CD8-positive, alpha-beta T cell (primary cell): ENCODE measurements at regions of chr19 and their contacts with region 1.

Region 1: DNA sequence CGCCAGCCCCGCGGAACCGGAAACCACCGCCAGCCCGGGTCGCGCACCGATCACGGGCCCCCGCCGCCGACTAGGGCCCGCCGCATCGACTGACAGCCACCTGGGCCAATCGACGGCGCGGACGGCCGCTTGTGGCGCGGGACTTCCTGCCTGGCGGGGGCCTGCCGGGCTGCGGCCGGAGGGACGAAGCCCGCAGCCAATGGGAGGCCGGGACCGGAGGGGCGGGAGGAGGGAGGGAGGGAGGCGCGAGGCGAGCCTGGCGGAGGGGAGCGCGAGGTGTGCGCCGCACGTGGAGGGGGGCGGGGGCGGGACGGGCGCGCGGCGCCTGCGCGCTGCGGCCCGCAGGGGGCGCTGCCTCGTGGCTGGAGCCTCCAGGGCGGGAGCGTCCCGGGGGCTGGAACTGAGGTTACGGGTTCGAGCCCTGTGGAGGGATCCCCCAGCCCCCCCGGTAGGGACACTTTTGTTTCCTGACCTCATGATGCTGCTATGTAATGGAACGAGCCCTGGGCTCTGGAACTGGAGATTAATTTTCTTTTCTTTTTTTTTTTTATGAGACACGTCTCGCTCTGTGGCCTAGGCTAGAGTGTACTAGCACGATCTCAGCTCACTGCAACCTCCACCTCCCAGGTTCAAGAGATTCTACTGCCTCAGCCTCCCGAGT is at the start of gene MLLT1:
- DNase-seq: peak; percentile 88 to 98 (median 93)
- ATAC-seq: peak; percentile 85
- H3K4me3 ChIP-seq: peak within 1 kb of the TSS; percentile 60 to 61
- H3K4me3 Mint-ChIP-seq: peak within 1 kb of the TSS; percentile 88
- H3K27ac ChIP-seq: peak within 1 kb of the TSS; percentile 50 to 77
- H3K27ac Mint-ChIP-seq: peak within 1 kb of the TSS; percentile 93
- H3K4me1 ChIP-seq: peaks cover 26% of the 10 kb centered on the region
- H3K4me1 Mint-ChIP-seq: peaks cover 44% of the 10 kb centered on the region
- H3K27me3 ChIP-seq: no peaks in the 10 kb centered on the region
- H3K27me3 Mint-ChIP-seq: no peaks in the 10 kb centered on the region
- CTCF ChIP-seq: peak; percentile 85
- total RNA-seq, gene MLLT1: 11.8 to 15.0 TPM

Region 2: DNA sequence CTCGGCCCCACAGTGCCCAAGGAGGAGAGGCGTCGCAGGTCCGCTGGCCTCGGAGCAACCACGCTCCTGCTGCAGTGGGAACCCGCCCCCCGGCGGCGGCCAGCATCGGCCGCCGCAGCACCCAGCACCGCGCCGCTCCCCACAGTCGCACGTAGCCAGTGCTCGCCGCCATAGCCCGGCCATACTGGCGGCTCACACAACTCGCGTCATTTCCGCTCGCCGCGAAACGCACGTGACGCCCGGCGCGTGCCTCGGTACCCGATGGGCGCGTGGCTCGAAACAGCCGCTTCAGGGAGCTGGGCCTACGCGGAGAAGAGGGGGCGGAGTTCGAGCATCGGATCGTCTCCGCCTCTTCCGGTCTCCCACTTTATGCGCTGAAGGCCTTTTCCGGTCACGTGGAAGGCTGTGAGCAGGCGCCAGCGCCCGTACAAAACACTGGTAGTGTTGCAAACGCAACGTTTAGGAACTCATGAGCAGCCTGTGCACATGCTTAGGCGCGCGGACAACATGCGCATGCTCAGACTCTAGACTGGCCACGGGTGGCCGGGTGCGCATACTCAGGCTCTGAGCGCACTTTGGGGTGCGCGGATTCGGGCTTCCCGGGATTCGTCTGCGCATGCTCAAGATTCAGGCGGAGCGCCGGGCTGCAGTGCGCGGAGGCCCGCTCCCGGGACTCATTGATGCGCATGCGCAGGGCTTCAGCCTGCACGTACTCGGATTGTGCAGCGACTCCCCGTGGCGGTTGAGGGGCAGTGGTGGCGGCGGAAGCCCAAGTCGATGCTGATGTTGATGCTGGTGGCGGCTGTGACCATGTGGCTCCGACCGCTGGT is 559.9 kb before region 1 on chr19 and contains the starts of genes CATSPERD and LONP1:
- CTCF ChIA-PET with region 1: interaction called, 3 read pairs
- POLR2A ChIA-PET with region 1: no interaction called
- intact Hi-C with region 1: loop called in 1 of 2 experiments (anchors 5 kb)
- DNase-seq: peak; percentile 92 to 100 (median 97)
- ATAC-seq: peak; percentile 86
- H3K4me3 ChIP-seq: peak within 1 kb of the TSS; percentile 91 to 94
- H3K4me3 Mint-ChIP-seq: peak within 1 kb of the TSS; percentile 92
- H3K27ac ChIP-seq: peak within 1 kb of the TSS; percentile 93 to 96
- H3K27ac Mint-ChIP-seq: peak within 1 kb of the TSS; percentile 96
- H3K4me1 ChIP-seq: peaks cover 23% of the 10 kb centered on the region
- H3K4me1 Mint-ChIP-seq: peaks cover 29% of the 10 kb centered on the region
- H3K27me3 ChIP-seq: no peaks in the 10 kb centered on the region
- H3K27me3 Mint-ChIP-seq: no peaks in the 10 kb centered on the region
- CTCF ChIP-seq: peak; percentile 89
- total RNA-seq, gene CATSPERD: not detected
- total RNA-seq, gene LONP1: 90.6 to 109 TPM

Region 3: DNA sequence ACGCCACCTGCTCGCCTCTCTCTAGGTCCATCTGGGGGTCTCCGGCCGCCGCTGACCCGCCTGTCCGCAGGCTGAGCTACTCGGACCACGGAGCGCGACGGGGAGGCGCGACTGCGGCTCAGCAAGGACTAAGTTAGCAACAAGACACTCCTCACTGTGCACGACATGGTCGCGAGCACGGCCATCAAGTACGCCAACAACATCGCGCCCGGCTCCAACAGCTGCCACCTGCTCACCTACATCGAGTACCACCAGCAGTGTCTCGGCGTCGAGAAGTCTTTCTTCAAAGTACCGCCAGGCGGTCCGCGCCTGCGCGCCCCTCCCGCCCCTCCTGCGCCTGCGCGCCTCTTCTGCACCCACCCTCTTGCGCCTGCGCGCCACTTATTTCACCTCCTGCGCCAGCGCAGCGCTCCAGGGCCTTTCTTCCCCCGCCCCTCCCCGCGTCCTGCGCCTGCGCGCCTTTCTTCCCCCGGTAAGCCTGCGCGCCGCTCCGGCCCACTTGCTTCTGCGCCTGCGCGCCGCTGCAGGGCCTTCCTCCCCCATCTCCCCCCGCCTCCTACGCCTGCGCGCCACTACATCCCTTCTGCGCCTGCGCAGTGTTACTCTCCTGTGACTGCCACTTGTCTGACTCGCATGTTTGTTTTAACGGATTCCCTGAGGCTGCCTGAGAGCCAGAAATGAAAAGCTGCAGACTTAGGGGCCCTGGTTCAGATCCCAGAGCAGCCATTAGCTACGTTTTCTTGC is 80.6 kb before region 1 on chr19:
- CTCF ChIA-PET with region 1: no interaction called
- POLR2A ChIA-PET with region 1: no interaction called
- intact Hi-C with region 1: loop called in 1 of 2 experiments (anchors 1 kb)
- DNase-seq: peak; percentile 98 to 100 (median 100)
- ATAC-seq: peak; percentile 90
- H3K4me3 ChIP-seq: peak overlapping the region; percentile 80 to 99
- H3K4me3 Mint-ChIP-seq: peak overlapping the region; percentile 94
- H3K27ac ChIP-seq: peak overlapping the region; percentile 65 to 73
- H3K27ac Mint-ChIP-seq: peak overlapping the region; percentile 87
- H3K4me1 ChIP-seq: peaks cover 11% of the 10 kb centered on the region
- H3K4me1 Mint-ChIP-seq: peaks cover 10% of the 10 kb centered on the region
- H3K27me3 ChIP-seq: no peaks in the 10 kb centered on the region
- H3K27me3 Mint-ChIP-seq: peaks cover 3% of the 10 kb centered on the region
- CTCF ChIP-seq: peak; percentile 51

Region 4: GRCh38 chr19:6318772-6319171 is 38.7 kb after region 1 on chr19:
- CTCF ChIA-PET with region 1: no interaction called
- POLR2A ChIA-PET with region 1: no interaction called
- intact Hi-C with region 1: no loop called
- DNase-seq: no peak
- ATAC-seq: no peak
- H3K4me3 ChIP-seq: no peak overlapping the region
- H3K4me3 Mint-ChIP-seq: no peak overlapping the region
- H3K27ac ChIP-seq: no peak overlapping the region
- H3K27ac Mint-ChIP-seq: no peak overlapping the region
- H3K4me1 ChIP-seq: no peaks in the 10 kb centered on the region
- H3K4me1 Mint-ChIP-seq: no peaks in the 10 kb centered on the region
- H3K27me3 ChIP-seq: no peaks in the 10 kb centered on the region
- H3K27me3 Mint-ChIP-seq: no peaks in the 10 kb centered on the region
- CTCF ChIP-seq: no peak

Region 5: DNA sequence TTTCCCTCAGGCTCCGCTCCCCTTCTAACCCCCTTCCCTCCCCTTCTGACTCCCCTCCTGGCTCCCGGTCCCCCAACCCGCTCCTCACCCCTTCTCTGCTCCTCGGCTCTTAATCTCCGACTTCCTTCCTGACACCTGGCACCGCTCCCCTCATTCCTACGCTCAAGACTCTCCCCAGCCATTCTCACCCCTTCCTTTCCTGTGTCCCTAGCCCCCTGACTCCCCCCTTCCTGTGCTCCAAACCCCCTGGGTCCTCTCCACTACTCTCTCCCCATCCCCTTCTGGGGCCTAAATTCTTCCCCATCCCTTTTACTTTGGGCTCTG is 81.9 kb after region 1 on chr19:
- CTCF ChIA-PET with region 1: interaction called, 3 read pairs
- POLR2A ChIA-PET with region 1: no interaction called
- intact Hi-C with region 1: loop called (anchors 1 to 2 kb)
- DNase-seq: no peak
- ATAC-seq: peak; percentile 1
- H3K4me3 ChIP-seq: peak overlapping the region; percentile 78 to 79
- H3K4me3 Mint-ChIP-seq: peak overlapping the region; percentile 93
- H3K27ac ChIP-seq: peak overlapping the region; percentile 72 to 85
- H3K27ac Mint-ChIP-seq: peak overlapping the region; percentile 94
- H3K4me1 ChIP-seq: peaks cover 21% of the 10 kb centered on the region
- H3K4me1 Mint-ChIP-seq: peaks cover 25% of the 10 kb centered on the region
- H3K27me3 ChIP-seq: no peaks in the 10 kb centered on the region
- H3K27me3 Mint-ChIP-seq: no peaks in the 10 kb centered on the region
- CTCF ChIP-seq: no peak

Region 6: DNA sequence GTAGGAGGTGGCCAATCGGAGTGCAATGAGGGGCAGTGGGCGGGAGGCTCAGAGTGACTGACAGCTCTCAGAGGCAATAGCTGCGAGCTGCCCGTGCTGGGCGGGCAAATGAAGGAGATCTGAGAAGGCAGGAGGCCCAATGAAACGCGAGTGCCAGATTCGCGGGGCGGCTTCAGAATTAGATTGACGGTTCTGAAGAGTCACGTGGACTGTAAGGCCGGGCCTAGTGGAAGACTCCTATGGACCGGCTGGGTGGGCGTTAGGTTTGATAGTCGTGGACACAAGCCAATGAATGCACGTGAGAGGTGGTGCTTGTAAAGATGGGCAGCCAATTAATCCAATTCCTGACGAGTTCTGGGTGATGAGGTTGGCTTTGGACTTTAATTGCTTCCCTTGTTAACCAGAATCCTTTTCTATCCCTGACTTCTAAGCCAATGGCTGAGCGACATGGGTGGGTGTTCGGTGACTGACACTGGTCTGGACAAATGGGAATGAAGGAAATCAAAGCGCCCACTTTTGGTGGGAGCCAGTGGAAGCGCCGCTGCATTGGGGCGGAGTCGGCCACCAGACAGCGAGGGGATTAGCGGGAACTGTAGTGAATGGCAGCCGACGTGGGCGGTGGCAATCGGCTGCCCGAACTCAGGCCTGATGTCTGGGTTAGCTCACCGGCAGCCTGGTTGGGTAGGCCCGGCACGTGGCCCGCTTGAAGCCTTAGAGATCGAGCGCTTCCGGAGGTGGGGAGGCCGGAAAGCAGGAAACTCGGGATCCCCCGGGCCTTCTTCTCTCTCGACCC is 145.1 kb after region 1 on chr19:
- CTCF ChIA-PET with region 1: no interaction called
- POLR2A ChIA-PET with region 1: no interaction called
- intact Hi-C with region 1: loop called (anchors 1 kb)
- DNase-seq: peak; percentile 97 to 100 (median 98)
- ATAC-seq: peak; percentile 82
- H3K4me3 ChIP-seq: peak overlapping the region; percentile 7 to 48
- H3K4me3 Mint-ChIP-seq: peak overlapping the region; percentile 78
- H3K27ac ChIP-seq: peak overlapping the region; percentile 39 to 92
- H3K27ac Mint-ChIP-seq: peak overlapping the region; percentile 93
- H3K4me1 ChIP-seq: peaks cover 35% of the 10 kb centered on the region
- H3K4me1 Mint-ChIP-seq: peaks cover 37% of the 10 kb centered on the region
- H3K27me3 ChIP-seq: no peaks in the 10 kb centered on the region
- H3K27me3 Mint-ChIP-seq: no peaks in the 10 kb centered on the region
- CTCF ChIP-seq: no peak

Region 7: DNA sequence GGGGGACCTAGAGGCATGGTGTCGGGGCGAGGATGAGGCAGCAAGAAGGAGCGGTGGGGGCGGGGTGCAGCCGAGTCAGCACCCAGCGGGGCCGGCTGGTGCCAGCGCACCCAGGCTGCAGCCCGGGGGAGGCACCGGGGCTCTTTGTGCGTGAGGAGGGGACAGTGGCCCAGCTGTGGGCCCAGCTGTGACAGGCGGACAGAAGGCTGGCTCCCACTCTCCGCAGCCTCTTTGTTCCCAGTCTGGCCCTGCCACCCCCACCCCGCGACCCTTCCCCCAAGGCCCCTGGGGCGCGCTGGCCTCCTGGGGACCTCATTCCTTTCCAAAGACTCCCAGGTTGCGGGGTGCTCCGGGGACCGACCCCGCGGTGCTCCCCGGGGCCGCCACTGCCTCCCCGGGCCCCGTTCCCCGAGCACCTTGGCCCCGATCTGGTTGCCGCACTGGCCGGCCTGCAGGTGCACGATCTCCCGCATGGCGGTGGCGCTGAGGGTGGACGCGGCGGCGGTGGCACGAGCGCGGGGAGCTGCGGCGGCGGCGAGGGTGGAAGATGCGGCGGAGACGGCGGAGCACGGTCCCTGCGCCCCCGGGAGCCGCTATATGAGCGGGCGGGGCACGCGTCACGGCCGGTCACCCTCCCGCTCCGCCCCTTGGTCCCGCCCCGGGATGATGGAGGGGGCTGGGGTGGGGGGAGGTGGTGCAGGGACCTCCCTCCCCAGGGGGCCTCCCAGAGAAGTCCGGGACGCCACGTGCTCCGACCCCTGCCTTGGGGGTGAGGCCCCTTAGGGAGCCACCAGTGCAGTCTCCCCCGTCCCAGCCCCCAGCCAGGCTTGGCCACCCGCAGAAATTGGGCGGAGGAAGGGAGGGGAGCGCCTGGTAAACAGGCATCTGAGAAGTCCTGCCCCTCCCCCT is 221.9 kb after region 1 on chr19 and contains the start of gene TUBB4A:
- CTCF ChIA-PET with region 1: no interaction called
- POLR2A ChIA-PET with region 1: no interaction called
- intact Hi-C with region 1: loop called in 1 of 2 experiments (anchors 2 kb)
- DNase-seq: peak in 8 of 9 experiments; percentile 18 to 73 (median 46)
- ATAC-seq: peak; percentile 52
- H3K4me3 ChIP-seq: peak within 1 kb of the TSS; percentile 48 to 56
- H3K4me3 Mint-ChIP-seq: peak within 1 kb of the TSS; percentile 85
- H3K27ac ChIP-seq: no peak within 1 kb of the TSS
- H3K27ac Mint-ChIP-seq: no peak within 1 kb of the TSS
- H3K4me1 ChIP-seq: peaks cover 4% of the 10 kb centered on the region
- H3K4me1 Mint-ChIP-seq: peaks cover 27% of the 10 kb centered on the region
- H3K27me3 ChIP-seq: peaks cover 0 to 3% of the 10 kb centered on the region in 2 experiments
- H3K27me3 Mint-ChIP-seq: no peaks in the 10 kb centered on the region
- CTCF ChIP-seq: no peak
- total RNA-seq, gene TUBB4A: 1.4 to 1.6 TPM